MCF 10A (cell line): ENCODE measurements at regions of chr2 and their contacts with region 1.

Region 1: DNA sequence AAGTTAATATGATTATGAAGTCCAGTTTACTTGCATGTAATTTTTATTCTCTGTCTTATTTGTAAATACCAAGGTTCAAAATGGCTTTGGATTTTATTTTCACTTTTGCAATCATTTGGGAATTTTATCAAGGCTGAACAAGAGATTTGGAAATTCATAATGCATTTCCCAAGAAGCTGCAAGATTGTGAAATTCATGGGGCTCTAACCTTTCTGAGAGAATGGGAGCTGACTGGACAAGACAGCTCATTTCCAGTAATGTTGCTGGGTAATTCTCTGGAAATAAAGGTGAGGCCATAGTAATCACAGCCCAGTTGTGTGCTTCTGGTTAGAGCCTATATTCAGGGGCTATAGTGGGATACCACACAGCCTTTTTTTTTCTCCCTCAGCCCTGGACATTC is 21.5 kb upstream of the NABP1 start:
- DNase-seq: peak; percentile 94
- H3K4me3 Mint-ChIP-seq: no peak overlapping the region
- H3K27ac Mint-ChIP-seq: peak overlapping the region; percentile 90
- H3K4me1 Mint-ChIP-seq: peaks cover 21% of the 10 kb centered on the region
- H3K27me3 Mint-ChIP-seq: no peaks in the 10 kb centered on the region
- CTCF ChIP-seq: no peak

Region 2: DNA sequence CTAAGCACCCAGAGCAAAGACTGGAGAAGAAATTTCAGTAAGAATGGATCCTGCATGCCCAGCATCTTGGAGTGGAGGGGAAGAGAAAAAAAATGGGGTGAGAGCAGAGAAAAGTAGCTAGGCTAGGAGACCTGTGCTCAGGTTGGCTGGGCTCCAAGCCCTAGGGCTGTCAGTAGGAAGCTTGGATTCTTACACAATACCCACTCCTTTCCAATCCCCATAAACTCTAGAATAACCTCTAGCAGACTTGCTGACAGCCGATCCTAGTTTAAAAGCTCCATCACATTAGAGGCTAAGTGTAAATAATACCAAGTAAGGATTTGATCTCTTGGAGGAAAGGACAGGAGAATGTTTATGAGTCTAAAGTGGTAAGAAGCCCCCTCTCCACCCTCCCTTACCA is 24.6 kb before region 1 on chr2:
- CTCF ChIA-PET with region 1: interaction called, 3 read pairs
- POLR2A ChIA-PET with region 1: interaction called, 11 read pairs
- intact Hi-C with region 1: no loop called
- DNase-seq: peak; percentile 93
- H3K4me3 Mint-ChIP-seq: no peak overlapping the region
- H3K27ac Mint-ChIP-seq: no peak overlapping the region
- H3K4me1 Mint-ChIP-seq: peaks cover 60% of the 10 kb centered on the region
- H3K27me3 Mint-ChIP-seq: no peaks in the 10 kb centered on the region
- CTCF ChIP-seq: no peak

Region 3: DNA sequence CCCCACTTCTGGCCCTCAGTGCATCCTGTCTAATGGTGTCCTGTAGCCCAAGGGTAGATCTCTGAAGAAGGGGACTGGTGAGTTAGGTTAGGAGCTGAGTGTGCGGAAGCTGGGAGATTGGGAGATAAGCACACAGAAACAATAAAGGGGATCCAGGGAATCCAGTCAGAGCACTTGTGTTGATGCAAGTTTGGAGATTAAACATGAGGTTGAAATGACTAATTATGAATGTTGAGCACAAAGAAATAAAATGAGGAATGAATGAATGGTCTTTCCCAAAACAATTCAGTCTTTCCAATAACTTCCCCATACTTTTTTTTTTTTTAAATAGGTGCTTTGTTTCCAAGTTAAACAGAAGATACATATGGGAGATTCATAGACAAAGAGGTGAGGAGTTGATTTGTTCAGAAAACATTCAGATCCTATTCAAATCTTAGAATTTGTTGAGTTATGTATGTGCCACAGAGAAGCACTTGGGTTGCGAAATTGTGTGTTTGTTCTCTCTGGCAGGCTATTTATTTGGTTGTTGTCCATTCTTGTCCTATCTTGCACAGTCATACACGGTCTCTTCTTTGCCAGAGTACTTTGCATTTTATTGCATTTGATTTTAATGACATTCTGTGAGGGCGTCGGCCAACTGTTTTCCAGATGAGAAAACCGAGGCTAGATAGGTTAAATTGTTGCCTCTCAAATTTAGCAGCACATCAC is 10.0 kb before region 1 on chr2:
- CTCF ChIA-PET with region 1: interaction called, 3 read pairs
- POLR2A ChIA-PET with region 1: interaction called, 16 read pairs
- intact Hi-C with region 1: no loop called
- DNase-seq: peak; percentile 74
- H3K4me3 Mint-ChIP-seq: no peak overlapping the region
- H3K27ac Mint-ChIP-seq: peak overlapping the region; percentile 83
- H3K4me1 Mint-ChIP-seq: peaks cover 26% of the 10 kb centered on the region
- H3K27me3 Mint-ChIP-seq: no peaks in the 10 kb centered on the region
- CTCF ChIP-seq: no peak